ENCODE measurements at regions of chr19 and their contacts with region 1.

Region 1: GRCh38 chr19:17245244-17245984 is at the start of gene NR2F6:
- DNase-seq: no peak
- ATAC-seq: peak; percentile 13
- H3K4me3 Mint-ChIP-seq: peak within 1 kb of the TSS; percentile 70
- H3K27ac Mint-ChIP-seq: no peak within 1 kb of the TSS
- H3K4me1 Mint-ChIP-seq: peaks cover 5% of the 10 kb centered on the region
- H3K27me3 Mint-ChIP-seq: peaks cover 2% of the 10 kb centered on the region
- total RNA-seq, gene NR2F6: 7.4 to 7.9 TPM

Region 2: DNA sequence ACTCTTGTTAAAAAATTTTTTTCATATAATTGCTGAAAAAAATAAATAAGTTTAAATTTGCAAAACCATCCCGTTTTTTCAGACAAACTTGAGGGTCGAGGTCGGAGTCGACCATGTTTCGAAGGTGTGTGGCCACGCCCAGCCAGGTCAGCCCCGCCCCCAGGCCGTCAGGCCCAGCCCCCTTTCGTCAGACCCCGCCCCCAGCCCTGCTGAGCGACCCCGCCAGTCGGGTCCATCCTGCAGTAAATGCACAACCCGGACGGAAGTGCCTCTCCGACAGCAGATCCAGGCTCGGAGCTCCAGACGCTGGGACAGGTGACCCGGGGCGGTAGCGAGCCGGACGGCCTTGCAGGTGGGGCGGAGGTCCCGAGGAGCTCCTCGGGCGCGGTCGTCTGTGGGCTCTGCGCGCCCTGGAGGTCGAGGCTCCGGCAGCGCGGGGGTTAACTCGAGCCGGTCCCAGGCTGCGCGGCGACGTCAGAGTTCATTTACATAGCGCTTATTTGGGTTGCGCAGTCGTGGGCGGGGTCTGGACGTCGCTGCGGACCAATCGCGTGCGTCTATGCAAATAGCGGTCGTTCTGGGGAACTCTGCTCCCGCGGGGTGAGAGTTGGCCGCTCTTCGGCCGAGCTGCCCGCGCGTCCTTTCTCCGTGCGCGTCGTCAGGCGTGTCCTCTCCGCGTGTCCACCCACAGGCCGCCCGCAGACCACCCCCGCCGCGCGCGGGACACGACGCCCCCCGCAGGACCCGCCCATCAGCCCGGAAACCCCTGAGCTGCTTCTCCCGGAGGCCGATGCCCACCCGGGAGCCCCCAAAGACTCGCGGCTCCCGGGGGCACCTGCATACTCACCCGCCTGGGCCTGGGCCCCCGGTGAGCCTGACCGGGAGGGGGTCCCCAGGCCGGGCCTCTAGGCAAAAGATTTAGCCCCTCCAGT is 19.1 kb before region 1 on chr19 and contains the start of gene OCEL1:
- CTCF ChIA-PET with region 1: no interaction called
- POLR2A ChIA-PET with region 1: no interaction called
- intact Hi-C with region 1: loop called in 1 of 2 experiments (anchors 1 kb)
- DNase-seq: peak; percentile 99
- ATAC-seq: peak; percentile 92
- H3K4me3 Mint-ChIP-seq: peak within 1 kb of the TSS; percentile 80
- H3K27ac Mint-ChIP-seq: peak within 1 kb of the TSS; percentile 93
- H3K4me1 Mint-ChIP-seq: peaks cover 7% of the 10 kb centered on the region
- H3K27me3 Mint-ChIP-seq: no peaks in the 10 kb centered on the region
- total RNA-seq, gene OCEL1: 10.9 to 11.7 TPM

Region 3: GRCh38 chr19:17260842-17261325 is 15.5 kb after region 1 on chr19:
- CTCF ChIA-PET with region 1: interaction called, 14 read pairs
- POLR2A ChIA-PET with region 1: no interaction called
- intact Hi-C with region 1: no loop called
- DNase-seq: peak; percentile 96
- ATAC-seq: peak; percentile 100
- H3K4me3 Mint-ChIP-seq: no peak overlapping the region
- H3K27ac Mint-ChIP-seq: peak overlapping the region; percentile 56
- H3K4me1 Mint-ChIP-seq: peaks cover 6% of the 10 kb centered on the region
- H3K27me3 Mint-ChIP-seq: no peaks in the 10 kb centered on the region